ENCODE measurements at regions of chr7 and their contacts with region 1.

Region 1: DNA sequence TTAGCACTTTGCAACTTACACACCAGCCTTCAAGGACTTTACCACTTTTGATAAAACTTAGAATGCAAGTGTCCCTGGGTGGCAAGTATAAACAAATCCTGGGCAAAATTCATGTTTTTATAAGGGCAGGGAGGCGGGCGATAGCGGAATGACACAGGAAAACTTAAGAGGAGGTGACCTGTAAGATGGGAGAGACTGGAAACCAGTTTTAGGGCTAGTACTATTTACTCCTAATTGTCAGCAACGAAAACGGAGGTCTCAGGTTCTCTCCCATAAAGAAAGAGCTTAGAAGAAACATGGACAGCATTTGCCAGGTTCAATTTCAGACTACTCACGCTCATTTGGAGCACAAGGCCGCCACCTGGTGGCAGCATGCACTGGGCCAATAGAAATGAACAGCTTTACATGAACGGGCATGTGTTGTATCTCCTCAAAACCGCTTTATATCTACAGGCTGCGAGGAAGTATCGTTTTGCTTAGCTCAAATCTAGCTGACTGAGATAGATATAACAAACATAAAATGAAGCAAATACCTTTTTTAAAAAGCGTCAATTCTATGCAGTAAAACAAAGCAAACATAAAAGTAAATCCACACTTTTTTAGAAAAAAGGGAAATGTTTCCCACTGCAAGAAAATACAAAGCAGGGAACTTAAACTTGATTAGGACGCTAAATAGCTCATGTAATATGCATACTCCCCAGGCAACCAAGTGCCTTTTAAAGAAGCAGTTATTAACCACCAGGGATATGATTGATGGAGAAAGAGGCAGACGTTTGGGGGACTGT is 37.6 kb upstream of the SVOPL start:
- DNase-seq: peak; percentile 76 to 90 (median 79)
- ATAC-seq: peak; percentile 96
- H3K4me3 ChIP-seq: no peak overlapping the region
- H3K27ac ChIP-seq: no peak overlapping the region
- H3K4me1 ChIP-seq: no peaks in the 10 kb centered on the region
- H3K27me3 ChIP-seq: peaks cover 3 to 19% of the 10 kb centered on the region in 2 experiments; a peak in 4 of 5 replicates
- CTCF ChIP-seq: peak; percentile 85 to 97 (median 97)
- EP300 ChIP-seq: no peak
- POLR2A ChIP-seq: no peak
- RAD21 ChIP-seq: peak; percentile 98

Region 2: DNA sequence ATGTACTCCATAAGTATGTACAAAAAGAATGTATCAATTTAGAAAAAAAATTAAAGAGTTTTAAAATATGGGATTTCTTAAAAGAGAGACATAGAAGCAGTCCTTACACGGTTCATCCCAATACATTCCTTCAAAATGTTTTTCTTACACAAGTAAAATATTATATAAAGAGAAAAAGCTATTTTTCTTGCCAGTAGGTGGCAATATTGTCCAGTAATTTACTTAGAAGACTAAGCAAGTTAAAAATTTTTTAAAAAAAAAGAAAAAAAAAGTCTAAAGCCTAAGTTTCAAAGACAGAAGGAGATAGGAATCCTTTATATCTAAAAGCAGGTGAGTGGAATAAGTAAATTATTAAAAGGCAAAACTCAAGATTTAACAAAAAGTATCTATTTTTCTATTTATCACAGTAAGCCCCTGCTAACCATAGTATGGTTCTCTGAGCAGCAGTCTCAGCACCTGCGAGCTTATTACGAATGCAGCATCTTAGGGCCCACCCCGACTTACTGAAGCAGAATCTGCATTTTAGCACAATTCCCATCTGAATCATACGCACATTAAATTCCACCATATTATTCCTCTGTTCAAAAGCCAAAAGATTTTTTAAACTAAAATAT is 1132.6 kb before region 1 on chr7:
- CTCF ChIA-PET with region 1: interaction called, 6 read pairs
- POLR2A ChIA-PET with region 1: no interaction called
- in situ Hi-C with region 1: no loop called
- intact Hi-C with region 1: loop called (anchors 2 kb)
- DNase-seq: peak in 3 of 4 experiments; percentile 32 to 54 (median 42)
- ATAC-seq: peak; percentile 78
- H3K4me3 ChIP-seq: no peak overlapping the region
- H3K27ac ChIP-seq: no peak overlapping the region
- H3K4me1 ChIP-seq: no peaks in the 10 kb centered on the region
- H3K27me3 ChIP-seq: peaks cover 0 to 2% of the 10 kb centered on the region in 2 experiments; a peak in 1 of 5 replicates
- CTCF ChIP-seq: peak in 2 of 3 experiments; percentile 20 to 67; a peak in 4 of 6 replicates
- EP300 ChIP-seq: no peak
- POLR2A ChIP-seq: no peak
- RAD21 ChIP-seq: peak; percentile 58 to 59

Region 3: DNA sequence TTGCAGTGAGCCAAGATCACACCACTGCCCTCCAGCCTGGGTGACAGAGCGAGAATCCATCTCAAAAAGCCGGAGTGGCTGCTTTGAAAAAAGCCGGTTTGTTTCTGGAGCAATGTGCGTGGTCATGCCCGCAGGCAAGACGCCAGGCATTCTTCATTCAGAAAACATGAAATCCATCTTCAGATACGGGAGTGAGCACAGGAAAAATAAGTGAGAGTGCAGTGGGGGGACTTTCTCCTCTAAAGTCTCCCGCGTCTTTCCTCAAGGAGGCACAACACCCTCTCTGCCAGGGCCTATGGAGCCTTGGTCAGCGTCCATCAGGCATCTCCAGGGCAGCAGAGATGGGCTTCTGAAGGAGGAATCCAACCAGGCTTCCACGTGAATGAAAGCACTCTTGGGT is 829.7 kb before region 1 on chr7:
- CTCF ChIA-PET with region 1: interaction called, 20 read pairs
- POLR2A ChIA-PET with region 1: no interaction called
- in situ Hi-C with region 1: loop called (anchors 5 kb)
- intact Hi-C with region 1: no loop called
- DNase-seq: no peak
- ATAC-seq: no peak
- H3K4me3 ChIP-seq: no peak overlapping the region
- H3K27ac ChIP-seq: no peak overlapping the region
- H3K4me1 ChIP-seq: 0 out of 5 replicates have a peak, but pooled peaks cover 0 to under 1% of the 10 kb centered on the region in 2 experiments
- H3K27me3 ChIP-seq: no peaks in the 10 kb centered on the region
- CTCF ChIP-seq: no peak
- EP300 ChIP-seq: no peak
- POLR2A ChIP-seq: no peak
- RAD21 ChIP-seq: no peak

Region 4: DNA sequence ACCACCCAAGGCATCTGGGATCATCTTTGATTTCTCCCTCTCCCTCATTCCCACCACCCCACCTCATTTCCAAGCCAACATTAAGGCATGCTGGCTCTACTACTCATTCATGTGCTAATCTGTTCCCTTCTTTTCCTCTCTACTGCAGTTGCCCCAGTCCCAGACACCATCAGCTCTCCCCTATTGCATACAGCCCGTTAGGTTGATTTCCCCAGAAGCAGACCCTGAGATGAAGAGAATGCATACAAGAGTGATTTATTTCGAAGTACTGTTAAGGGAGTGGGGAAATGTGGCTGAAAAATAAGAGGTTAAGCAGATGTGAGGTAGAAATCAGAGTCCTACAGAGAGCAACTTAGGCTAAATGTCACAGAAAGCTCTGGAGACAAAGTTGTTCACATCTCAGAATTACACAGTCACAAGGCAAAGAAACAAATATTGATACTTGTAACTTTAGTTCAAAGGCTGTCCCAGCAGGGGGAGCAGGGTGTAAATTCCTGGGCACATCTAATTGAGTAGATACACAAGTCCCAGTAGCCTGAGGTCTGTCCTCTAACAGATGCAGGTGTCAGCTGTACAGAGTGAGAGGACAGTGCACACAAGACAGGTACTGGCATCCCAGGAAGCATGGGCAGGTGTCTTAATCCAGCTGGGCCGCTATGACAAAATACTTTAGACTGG is 641.5 kb before region 1 on chr7:
- CTCF ChIA-PET with region 1: interaction called, 3 read pairs
- POLR2A ChIA-PET with region 1: no interaction called
- in situ Hi-C with region 1: no loop called
- intact Hi-C with region 1: loop called (anchors 2 kb)
- DNase-seq: peak; percentile 36 to 60 (median 46)
- ATAC-seq: peak; percentile 86
- H3K4me3 ChIP-seq: no peak overlapping the region
- H3K27ac ChIP-seq: no peak overlapping the region
- H3K4me1 ChIP-seq: no peaks in the 10 kb centered on the region
- H3K27me3 ChIP-seq: peaks cover 0 to 1% of the 10 kb centered on the region in 2 experiments; a peak in 3 of 5 replicates
- CTCF ChIP-seq: peak; percentile 50 to 60 (median 57)
- EP300 ChIP-seq: no peak
- POLR2A ChIP-seq: no peak
- RAD21 ChIP-seq: peak; percentile 50 to 65

Region 5: GRCh38 chr7:138176060-138176459 is 562.7 kb before region 1 on chr7:
- CTCF ChIA-PET with region 1: no interaction called
- POLR2A ChIA-PET with region 1: no interaction called
- in situ Hi-C with region 1: loop called (anchors 5 kb)
- intact Hi-C with region 1: no loop called
- DNase-seq: no peak
- ATAC-seq: no peak
- H3K4me3 ChIP-seq: no peak overlapping the region
- H3K27ac ChIP-seq: no peak overlapping the region
- H3K4me1 ChIP-seq: no peaks in the 10 kb centered on the region
- H3K27me3 ChIP-seq: peaks cover 0 to 5% of the 10 kb centered on the region in 2 experiments; a peak in 2 of 5 replicates
- CTCF ChIP-seq: no peak
- EP300 ChIP-seq: no peak
- POLR2A ChIP-seq: no peak
- RAD21 ChIP-seq: no peak

Region 6: DNA sequence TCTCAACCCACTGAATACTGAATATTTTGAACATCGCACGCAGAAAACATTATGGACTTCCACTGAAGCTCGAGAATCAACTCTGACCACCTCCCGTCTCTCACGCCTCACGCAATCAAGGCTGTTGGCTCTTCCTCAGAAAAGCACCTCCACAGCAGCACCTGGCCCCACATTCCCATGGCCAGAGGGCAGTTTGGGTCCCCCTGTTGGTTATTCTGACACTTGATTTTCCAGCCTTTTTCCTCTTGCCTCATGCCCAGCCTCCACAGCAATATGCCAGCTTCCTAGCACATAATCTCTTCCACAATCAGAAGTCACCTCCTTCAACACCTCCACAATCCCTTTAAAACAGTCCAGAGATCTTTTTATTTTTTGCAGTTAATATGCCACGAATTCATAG is 93.5 kb before region 1 on chr7:
- CTCF ChIA-PET with region 1: no interaction called
- POLR2A ChIA-PET with region 1: no interaction called
- in situ Hi-C with region 1: no loop called
- intact Hi-C with region 1: loop called (anchors 5 kb)
- DNase-seq: peak in 2 of 4 experiments; percentile 30 to 49
- ATAC-seq: peak; percentile 69
- H3K4me3 ChIP-seq: no peak overlapping the region
- H3K27ac ChIP-seq: no peak overlapping the region
- H3K4me1 ChIP-seq: no peaks in the 10 kb centered on the region
- H3K27me3 ChIP-seq: peaks cover 4 to 32% of the 10 kb centered on the region in 2 experiments; a peak in 3 of 5 replicates
- CTCF ChIP-seq: peak; percentile 44 to 58 (median 57)
- EP300 ChIP-seq: no peak
- POLR2A ChIP-seq: no peak
- RAD21 ChIP-seq: peak; percentile 17 to 58; a peak in 3 of 4 replicates

Region 7: DNA sequence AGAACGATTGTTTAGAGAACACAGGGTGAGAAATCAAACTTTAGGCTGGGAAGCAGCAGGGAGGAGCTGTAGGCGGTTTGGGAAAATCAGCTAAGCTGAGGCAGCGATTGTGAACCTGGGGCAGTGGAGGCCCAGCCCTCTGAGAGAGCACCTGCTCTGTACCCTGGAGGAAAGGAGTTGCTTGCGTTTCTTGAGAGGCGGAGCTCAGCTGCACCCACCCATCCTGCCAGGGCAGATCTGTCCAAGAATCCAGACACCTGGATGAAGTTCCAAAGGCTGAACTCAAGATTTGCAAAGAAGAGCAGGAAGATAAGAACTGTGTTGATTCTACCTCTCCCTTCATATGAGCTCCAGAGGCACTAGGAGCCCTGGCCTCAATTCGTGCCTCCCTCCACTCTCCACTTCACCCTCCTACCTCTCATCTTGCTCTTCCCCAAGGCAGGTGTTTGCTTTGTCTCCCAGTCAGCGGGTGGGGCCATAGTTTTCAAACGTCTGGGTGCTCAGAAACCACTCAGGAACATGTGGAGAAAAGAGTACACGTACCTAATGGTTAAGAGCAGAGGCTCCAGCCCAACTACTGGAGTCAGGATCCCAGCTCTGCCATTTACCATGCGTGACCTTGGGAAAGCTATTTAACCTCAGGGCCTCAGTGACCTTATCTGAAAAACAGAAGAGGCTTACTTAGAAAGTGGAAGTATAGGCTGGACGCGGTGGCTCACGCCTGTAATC is 37.6 kb after region 1 on chr7:
- CTCF ChIA-PET with region 1: no interaction called
- POLR2A ChIA-PET with region 1: no interaction called
- in situ Hi-C with region 1: no loop called
- intact Hi-C with region 1: no loop called
- DNase-seq: no peak
- ATAC-seq: no peak; the same call in 2 of the 3 replicates
- H3K4me3 ChIP-seq: no peak overlapping the region
- H3K27ac ChIP-seq: no peak overlapping the region
- H3K4me1 ChIP-seq: no peaks in the 10 kb centered on the region; a peak in 1 of 5 replicates
- H3K27me3 ChIP-seq: peaks cover 12 to 38% of the 10 kb centered on the region in 2 experiments; a peak in 4 of 5 replicates
- CTCF ChIP-seq: no peak
- EP300 ChIP-seq: no peak
- POLR2A ChIP-seq: no peak
- RAD21 ChIP-seq: no peak

Region 8: GRCh38 chr7:138934861-138935260 is 196.1 kb after region 1 on chr7:
- CTCF ChIA-PET with region 1: no interaction called
- POLR2A ChIA-PET with region 1: no interaction called
- in situ Hi-C with region 1: no loop called
- intact Hi-C with region 1: no loop called
- DNase-seq: no peak
- ATAC-seq: no peak
- H3K4me3 ChIP-seq: no peak overlapping the region
- H3K27ac ChIP-seq: no peak overlapping the region
- H3K4me1 ChIP-seq: 0 out of 5 replicates have a peak, but pooled peaks cover 0 to 5% of the 10 kb centered on the region in 2 experiments
- H3K27me3 ChIP-seq: peaks cover 48 to 72% of the 10 kb centered on the region in 2 experiments
- CTCF ChIP-seq: no peak
- EP300 ChIP-seq: no peak
- POLR2A ChIP-seq: no peak
- RAD21 ChIP-seq: no peak

Region 9: GRCh38 chr7:139058943-139059342 is 320.2 kb after region 1 on chr7:
- CTCF ChIA-PET with region 1: no interaction called
- POLR2A ChIA-PET with region 1: no interaction called
- in situ Hi-C with region 1: no loop called
- intact Hi-C with region 1: no loop called
- DNase-seq: no peak
- ATAC-seq: no peak
- H3K4me3 ChIP-seq: no peak overlapping the region
- H3K27ac ChIP-seq: no peak overlapping the region
- H3K4me1 ChIP-seq: peaks cover 0 to 3% of the 10 kb centered on the region in 2 experiments; a peak in 1 of 5 replicates
- H3K27me3 ChIP-seq: no peaks in the 10 kb centered on the region
- CTCF ChIP-seq: no peak
- EP300 ChIP-seq: no peak
- POLR2A ChIP-seq: no peak
- RAD21 ChIP-seq: no peak

Measured in K562 (cell line).